AG04450 (cell line): ENCODE measurements at regions of chr12 and their contacts with region 1.

Region 1: DNA sequence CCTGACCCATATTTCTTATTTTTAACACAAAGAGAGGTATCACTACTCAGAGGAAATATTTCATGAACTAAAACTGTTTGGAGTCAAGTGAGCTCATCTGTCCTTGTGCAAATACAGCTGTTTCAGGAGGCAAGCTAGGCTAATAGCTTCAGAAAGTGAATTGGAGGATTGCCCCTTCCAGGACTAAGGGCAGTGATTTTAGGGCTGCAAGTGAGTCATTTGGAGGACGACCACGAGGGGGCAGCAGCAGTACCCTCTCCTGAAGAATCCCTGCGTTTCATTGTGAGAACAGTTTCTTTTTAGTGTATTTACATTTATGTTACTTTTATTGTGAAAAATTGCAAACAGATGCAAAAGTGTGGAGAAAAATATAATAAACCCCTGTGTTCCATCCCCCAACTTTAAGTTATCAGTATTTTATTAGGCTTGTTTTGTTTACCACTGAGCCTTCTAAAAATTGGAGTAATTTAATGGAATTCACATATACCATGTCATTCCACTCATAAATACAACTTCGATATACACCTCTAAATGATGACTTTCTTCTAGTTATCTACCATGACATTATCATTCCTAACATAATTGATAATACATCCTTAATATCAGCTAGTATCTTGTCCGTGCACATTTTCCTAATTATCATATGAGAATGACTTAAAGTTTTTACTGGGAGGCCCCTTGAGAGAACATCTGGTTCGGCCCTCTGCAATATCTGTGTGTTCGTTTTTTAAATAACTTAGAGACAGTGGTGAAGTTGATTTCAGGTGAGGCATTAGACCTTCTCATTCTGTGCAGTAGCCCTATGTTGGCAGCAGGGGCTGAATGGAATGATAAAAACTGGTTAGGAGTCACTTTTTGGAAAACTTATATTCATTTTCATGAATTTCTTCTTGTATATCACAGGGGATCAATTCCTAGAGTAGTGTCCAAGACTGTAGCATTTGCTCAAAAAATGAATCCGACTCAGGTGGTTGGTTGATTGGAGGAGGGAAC is 13.7 kb downstream of the FOXJ2 start:
- DNase-seq: peak; percentile 82
- H3K4me3 ChIP-seq: no peak overlapping the region
- H3K27ac ChIP-seq: no peak overlapping the region
- H3K27me3 ChIP-seq: no peaks in the 10 kb centered on the region
- CTCF ChIP-seq: peak; percentile 94

Region 2: GRCh38 chr12:7995266-7995963 is 50.8 kb before region 1 on chr12:
- CTCF ChIA-PET with region 1: interaction called, 13 read pairs
- POLR2A ChIA-PET with region 1: no interaction called
- DNase-seq: peak; percentile 68
- H3K4me3 ChIP-seq: peak overlapping the region; percentile 23; the same call in 1 of the 2 replicates
- H3K27ac ChIP-seq: peak overlapping the region; percentile 96
- H3K27me3 ChIP-seq: no peaks in the 10 kb centered on the region
- CTCF ChIP-seq: peak; percentile 76

Region 3: GRCh38 chr12:8032242-8033152 is 13.8 kb before region 1 on chr12 and contains the start of gene FOXJ2:
- CTCF ChIA-PET with region 1: interaction called, 31 read pairs
- POLR2A ChIA-PET with region 1: no interaction called
- DNase-seq: no peak
- H3K4me3 ChIP-seq: peak within 1 kb of the TSS; percentile 87
- H3K27ac ChIP-seq: peak within 1 kb of the TSS; percentile 80
- H3K27me3 ChIP-seq: no peaks in the 10 kb centered on the region
- CTCF ChIP-seq: peak; percentile 14; the same call in 1 of the 2 replicates
- polyA plus RNA-seq, gene FOXJ2: 5.7 and 6.3 TPM in 2 replicates

Region 4: GRCh38 chr12:8057839-8058238 is 11.6 kb after region 1 on chr12:
- CTCF ChIA-PET with region 1: interaction called, 28 read pairs
- POLR2A ChIA-PET with region 1: no interaction called
- DNase-seq: no peak
- H3K4me3 ChIP-seq: no peak overlapping the region
- H3K27ac ChIP-seq: no peak overlapping the region
- H3K27me3 ChIP-seq: no peaks in the 10 kb centered on the region
- CTCF ChIP-seq: no peak

Region 5: GRCh38 chr12:8065991-8066594 is 19.8 kb after region 1 on chr12 and contains the start of gene C3AR1:
- CTCF ChIA-PET with region 1: interaction called, 19 read pairs
- POLR2A ChIA-PET with region 1: no interaction called
- DNase-seq: no peak
- H3K4me3 ChIP-seq: no peak within 1 kb of the TSS
- H3K27ac ChIP-seq: no peak within 1 kb of the TSS
- H3K27me3 ChIP-seq: no peaks in the 10 kb centered on the region
- CTCF ChIP-seq: no peak
- polyA plus RNA-seq, gene C3AR1: 0.52 and 0.71 TPM in 2 replicates

Region 6: GRCh38 chr12:9073076-9073475 is 1026.8 kb after region 1 on chr12:
- CTCF ChIA-PET with region 1: no interaction called
- POLR2A ChIA-PET with region 1: no interaction called
- DNase-seq: no peak
- H3K4me3 ChIP-seq: no peak overlapping the region
- H3K27ac ChIP-seq: no peak overlapping the region
- H3K27me3 ChIP-seq: no peaks in the 10 kb centered on the region
- CTCF ChIP-seq: no peak